Activated T-helper 1 cell treated with anti-CD3 and anti-CD28 coated beads, Interleukin-12 subunit alpha, Interleukin-12 subunit beta, Interleukin-2, Interleukin-4 antibody, amounts not matched to agents 30 ng/mL and 10 ng/mL and 1 ng/mL, durations not matched to agents 14 hours and 24 hours and 36 hours (primary cell): ENCODE measurements at regions of chrX and their contacts with region 1.

Region 1: GRCh38 chrX:39613482-39613921 is 484.3 kb downstream of the BCOR start:
- DNase-seq: peak; percentile 3
- H3K4me3 Mint-ChIP-seq: peak overlapping the region; percentile 87
- H3K27ac Mint-ChIP-seq: peak overlapping the region; percentile 95
- H3K4me1 Mint-ChIP-seq: peaks cover 42% of the 10 kb centered on the region
- H3K27me3 Mint-ChIP-seq: peaks cover 5% of the 10 kb centered on the region

Region 2: DNA sequence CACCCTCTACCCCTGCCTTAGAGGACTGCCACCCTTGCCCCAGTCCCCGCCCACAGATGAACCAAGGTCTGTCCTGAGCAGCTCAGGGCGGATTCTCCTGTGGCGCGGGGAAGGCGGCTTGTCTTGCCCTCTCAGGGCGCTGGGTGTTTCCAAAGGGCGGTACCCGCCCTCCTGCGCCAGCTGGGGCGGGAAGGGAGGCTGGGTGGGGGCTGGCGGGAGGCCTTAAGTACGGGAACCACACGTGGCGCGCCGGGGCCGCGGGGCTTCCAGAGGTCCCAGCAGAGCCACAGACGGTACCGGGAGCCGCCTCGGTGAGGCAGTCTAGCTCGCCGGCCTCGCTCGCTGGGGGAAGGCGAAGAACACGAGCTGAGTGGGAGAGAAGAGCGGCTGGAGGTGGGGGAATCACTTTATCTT is 451.2 kb before region 1 on chrX:
- intact Hi-C with region 1: loop called (anchors 10 kb)
- DNase-seq: no peak
- H3K4me3 Mint-ChIP-seq: peak overlapping the region; percentile 22
- H3K27ac Mint-ChIP-seq: peak overlapping the region; percentile 71
- H3K4me1 Mint-ChIP-seq: peaks cover 45% of the 10 kb centered on the region
- H3K27me3 Mint-ChIP-seq: peaks cover 2% of the 10 kb centered on the region

Region 3: GRCh38 chrX:39261446-39262147 is 351.9 kb before region 1 on chrX:
- intact Hi-C with region 1: loop called (anchors 1 kb)
- DNase-seq: peak; percentile 1
- H3K4me3 Mint-ChIP-seq: no peak overlapping the region
- H3K27ac Mint-ChIP-seq: peak overlapping the region; percentile 89
- H3K4me1 Mint-ChIP-seq: peaks cover 43% of the 10 kb centered on the region
- H3K27me3 Mint-ChIP-seq: no peaks in the 10 kb centered on the region

Region 4: DNA sequence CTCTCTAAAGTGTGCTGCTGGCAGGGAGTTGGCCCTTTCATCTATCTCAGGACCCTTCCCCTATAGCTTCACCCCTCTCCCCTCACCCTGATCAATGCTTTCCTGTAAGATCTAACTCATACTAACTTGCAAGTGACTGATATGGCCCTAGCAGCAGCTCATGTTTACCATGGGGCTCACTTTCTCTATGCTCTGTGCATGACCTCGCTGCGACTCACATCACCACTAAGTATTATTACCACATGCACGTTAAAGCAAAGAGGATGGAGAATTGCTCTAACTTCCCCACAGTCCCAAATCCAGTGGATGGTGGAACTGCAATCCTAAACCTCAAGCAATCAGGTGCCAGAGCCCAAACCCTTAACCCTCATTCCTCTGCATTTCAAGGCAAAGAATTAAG is 185.6 kb before region 1 on chrX:
- intact Hi-C with region 1: loop called (anchors 1 kb)
- DNase-seq: no peak
- H3K4me3 Mint-ChIP-seq: no peak overlapping the region
- H3K27ac Mint-ChIP-seq: peak overlapping the region; percentile 98
- H3K4me1 Mint-ChIP-seq: peaks cover 58% of the 10 kb centered on the region
- H3K27me3 Mint-ChIP-seq: no peaks in the 10 kb centered on the region

Region 5: GRCh38 chrX:39578354-39578869 is 35.1 kb before region 1 on chrX:
- intact Hi-C with region 1: loop called (anchors 1 kb)
- DNase-seq: peak; percentile 16
- H3K4me3 Mint-ChIP-seq: peak overlapping the region; percentile 59
- H3K27ac Mint-ChIP-seq: peak overlapping the region; percentile 82
- H3K4me1 Mint-ChIP-seq: peaks cover 28% of the 10 kb centered on the region
- H3K27me3 Mint-ChIP-seq: no peaks in the 10 kb centered on the region

Region 6: GRCh38 chrX:39859991-39860861 is 246.7 kb after region 1 on chrX:
- intact Hi-C with region 1: loop called (anchors 1 kb)
- DNase-seq: peak; percentile 79
- H3K4me3 Mint-ChIP-seq: peak overlapping the region; percentile 70
- H3K27ac Mint-ChIP-seq: peak overlapping the region; percentile 98
- H3K4me1 Mint-ChIP-seq: peaks cover 60% of the 10 kb centered on the region
- H3K27me3 Mint-ChIP-seq: no peaks in the 10 kb centered on the region